ENCODE measurements at regions of chr3 and their contacts with region 1.

Region 1: GRCh38 chr3:47522082-47522987 is 8.8 kb upstream of the ELP6 start:
- DNase-seq: peak; percentile 87
- ATAC-seq: peak; percentile 95
- H3K4me3 ChIP-seq: no peak overlapping the region
- H3K27ac ChIP-seq: no peak overlapping the region
- H3K4me1 ChIP-seq: no peaks in the 10 kb centered on the region
- H3K27me3 ChIP-seq: no peaks in the 10 kb centered on the region

Region 2: DNA sequence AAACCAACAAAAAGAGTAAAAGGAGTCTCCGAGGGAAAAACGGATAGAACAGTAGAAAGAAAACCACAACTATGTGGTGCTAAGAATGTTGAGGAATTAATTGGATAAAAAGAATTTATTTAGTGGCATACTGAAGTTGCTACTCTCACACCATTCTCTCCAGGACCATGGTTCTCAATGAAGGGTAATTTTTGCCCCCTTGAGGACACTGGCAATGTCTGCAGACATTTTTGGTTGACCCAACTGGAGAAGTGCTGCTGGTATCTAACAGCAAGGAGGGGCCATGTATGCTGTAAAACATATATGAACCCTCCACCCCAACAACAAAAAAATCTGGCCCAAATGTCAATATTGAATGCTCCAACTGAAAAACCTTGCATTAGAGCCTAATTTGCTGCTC is 142.2 kb after region 1 on chr3:
- intact Hi-C with region 1: loop called (anchors 10 kb)
- DNase-seq: no peak
- ATAC-seq: no peak
- H3K4me3 ChIP-seq: no peak overlapping the region
- H3K27ac ChIP-seq: no peak overlapping the region
- H3K4me1 ChIP-seq: no peaks in the 10 kb centered on the region
- H3K27me3 ChIP-seq: no peaks in the 10 kb centered on the region

Region 3: DNA sequence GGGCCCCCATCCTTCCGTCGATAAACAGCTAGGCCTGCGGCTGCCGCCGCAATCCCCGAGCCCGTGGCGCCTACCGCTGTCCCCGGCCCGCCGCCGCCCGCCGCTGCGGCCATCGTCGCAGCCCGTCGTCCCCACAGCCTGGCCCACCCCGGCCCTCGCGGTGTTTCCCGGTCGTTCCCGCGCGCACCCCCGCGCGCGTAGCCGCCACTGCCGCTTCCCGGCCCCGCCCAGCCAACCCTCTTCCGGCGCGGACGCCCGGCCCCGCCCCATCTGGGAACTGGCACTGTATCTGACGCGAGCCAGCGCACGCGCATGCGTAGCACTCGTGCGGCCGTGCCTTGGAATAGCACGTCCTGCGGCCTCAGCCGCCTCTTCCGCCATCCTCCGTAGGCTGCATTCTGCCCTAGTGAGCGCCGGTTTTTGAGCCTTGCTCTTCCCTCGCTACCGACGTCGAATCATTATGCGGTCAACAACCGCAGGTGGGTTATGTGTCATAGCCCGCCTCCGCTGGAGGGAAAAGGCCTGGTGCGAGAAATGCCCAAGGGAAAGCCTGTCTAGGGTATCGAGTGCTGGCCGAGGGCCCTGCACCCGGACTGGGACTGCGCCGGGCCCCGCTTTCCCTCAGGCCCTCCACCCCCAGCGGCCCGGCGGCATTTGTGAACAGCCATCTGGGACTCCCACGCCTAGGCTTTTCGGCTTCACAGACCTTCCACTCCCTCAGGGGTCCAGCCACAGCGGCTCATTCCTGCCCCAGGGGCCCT is 259.5 kb after region 1 on chr3 and contains the start of gene SMARCC1:
- intact Hi-C with region 1: loop called in 1 of 2 experiments (anchors 5 kb)
- DNase-seq: peak; percentile 99 to 100
- ATAC-seq: peak; percentile 99
- H3K4me3 ChIP-seq: peak within 1 kb of the TSS; percentile 83
- H3K27ac ChIP-seq: peak within 1 kb of the TSS; percentile 85 to 98
- H3K4me1 ChIP-seq: no peaks in the 10 kb centered on the region
- H3K27me3 ChIP-seq: no peaks in the 10 kb centered on the region
- total RNA-seq, gene SMARCC1: 65.3 to 66.8 TPM

Region 4: DNA sequence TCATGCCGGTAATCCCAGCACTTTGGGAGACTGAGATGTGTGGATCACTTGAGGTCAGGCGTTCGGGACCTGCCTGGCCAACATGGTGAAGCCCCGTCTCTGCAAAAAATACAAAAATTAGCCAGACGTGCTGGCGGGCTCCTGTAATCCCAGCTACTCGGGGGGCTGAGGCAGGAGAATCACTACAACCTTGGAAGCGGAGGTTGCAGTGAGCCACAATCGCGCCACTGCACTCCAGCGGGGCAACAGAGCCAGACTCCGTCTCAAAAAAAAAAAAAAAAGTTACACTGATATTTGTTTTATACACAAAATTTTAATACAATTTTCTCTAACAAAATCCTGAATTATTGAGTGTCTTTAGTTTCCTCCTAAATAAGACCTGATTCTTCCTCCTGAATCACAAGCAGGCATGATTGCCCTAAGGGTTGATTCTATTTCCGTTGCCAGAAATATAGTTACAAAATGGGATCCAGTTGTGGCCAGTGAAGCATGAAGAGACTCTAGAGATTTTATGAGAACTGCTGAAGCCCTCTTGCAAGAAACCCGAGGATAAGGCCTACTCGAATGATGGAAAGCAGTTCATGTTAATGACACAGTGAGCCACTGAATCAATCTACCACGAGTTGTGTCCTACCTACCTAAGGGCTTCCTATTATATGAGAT is 269.0 kb after region 1 on chr3:
- intact Hi-C with region 1: loop called (anchors 1 to 5 kb)
- DNase-seq: peak in 1 of 2 donors; percentile 39
- ATAC-seq: no peak
- H3K4me3 ChIP-seq: no peak overlapping the region
- H3K27ac ChIP-seq: no peak overlapping the region
- H3K4me1 ChIP-seq: no peaks in the 10 kb centered on the region
- H3K27me3 ChIP-seq: no peaks in the 10 kb centered on the region